ENCODE measurements at regions of chrX and their contacts with region 1.

Region 1: GRCh38 chrX:49184294-49185061 is 1.7 kb downstream of the PRICKLE3 start:
- DNase-seq: no peak
- H3K4me3 ChIP-seq: peak overlapping the region; percentile 67
- CTCF ChIP-seq: no peak

Region 2: DNA sequence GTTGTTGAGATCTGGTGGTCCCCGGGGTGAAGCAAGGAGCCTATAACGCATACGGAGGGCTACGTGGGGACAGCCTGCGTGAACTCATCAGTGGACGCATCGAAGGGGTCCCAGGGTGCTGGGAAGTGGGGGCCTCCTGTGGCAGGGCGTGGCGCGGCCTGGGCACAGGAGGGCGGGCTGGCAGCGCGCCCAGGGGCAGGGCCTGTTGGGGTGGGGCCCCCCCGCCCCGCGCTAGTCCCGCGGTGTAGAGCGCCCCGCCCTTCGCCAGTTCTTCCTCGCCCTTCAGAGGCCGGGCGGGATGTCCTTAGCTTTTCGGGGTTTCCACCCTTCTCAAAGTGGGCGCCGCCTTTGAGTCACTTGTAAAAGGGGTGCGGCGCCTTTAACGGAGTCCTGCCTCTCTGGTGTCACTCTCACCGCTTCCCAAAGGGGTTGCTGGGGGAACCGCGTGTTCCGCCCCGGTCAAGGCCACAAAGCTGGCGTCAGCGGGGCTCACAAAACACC is 12.1 kb before region 1 on chrX:
- CTCF ChIA-PET with region 1: no interaction called
- POLR2A ChIA-PET with region 1: interaction called, 10 read pairs
- DNase-seq: no peak
- H3K4me3 ChIP-seq: peak overlapping the region; percentile 66
- CTCF ChIP-seq: no peak

Region 3: DNA sequence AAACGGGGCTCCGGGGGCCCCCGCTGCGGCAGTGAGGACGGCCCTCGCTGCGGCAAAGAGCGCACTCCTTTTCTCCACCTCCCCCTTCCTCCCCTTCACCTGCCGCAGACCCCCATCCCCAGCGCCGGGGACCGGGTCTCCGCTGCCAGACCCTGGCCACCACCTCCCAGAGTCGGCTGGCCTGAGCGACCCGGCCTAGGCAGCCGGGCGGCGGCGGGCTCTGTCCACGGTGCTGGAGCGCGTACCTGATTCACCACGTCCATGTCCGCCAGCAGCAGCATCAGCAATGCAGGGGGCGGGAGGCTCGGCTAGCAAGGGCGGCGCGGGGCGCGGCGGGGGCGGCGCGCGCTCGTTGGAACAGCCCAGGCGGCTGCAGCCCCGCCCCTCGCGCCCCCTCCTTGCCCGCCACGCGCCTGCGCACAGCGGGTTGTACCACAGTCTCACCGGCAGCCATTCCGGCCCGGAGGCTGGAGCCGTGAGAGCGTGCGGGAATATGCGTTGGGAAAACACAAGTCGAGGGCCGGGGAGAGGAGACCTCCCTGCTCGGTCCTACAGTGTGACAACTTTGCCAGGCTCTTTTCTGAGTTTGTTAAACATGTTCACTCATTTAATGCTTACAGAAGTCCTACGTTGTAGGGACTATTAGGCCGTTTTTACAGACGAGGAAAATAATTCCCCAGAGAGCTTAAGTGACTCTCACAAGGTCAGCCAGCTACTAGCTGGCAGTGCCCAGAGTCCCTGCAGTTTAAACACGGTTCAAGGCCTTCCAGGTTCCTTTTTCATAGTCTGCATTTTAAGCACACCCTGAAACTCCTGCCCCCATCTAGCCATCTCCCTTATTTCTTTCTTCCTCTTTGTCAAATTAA is 15.7 kb after region 1 on chrX and contains the start of gene SYP:
- CTCF ChIA-PET with region 1: no interaction called
- POLR2A ChIA-PET with region 1: no interaction called
- DNase-seq: no peak
- H3K4me3 ChIP-seq: peak within 1 kb of the TSS; percentile 39
- CTCF ChIP-seq: no peak

Measured in AG04449 (cell line).